ENCODE measurements at regions of chr3 and their contacts with region 1.

Region 1: DNA sequence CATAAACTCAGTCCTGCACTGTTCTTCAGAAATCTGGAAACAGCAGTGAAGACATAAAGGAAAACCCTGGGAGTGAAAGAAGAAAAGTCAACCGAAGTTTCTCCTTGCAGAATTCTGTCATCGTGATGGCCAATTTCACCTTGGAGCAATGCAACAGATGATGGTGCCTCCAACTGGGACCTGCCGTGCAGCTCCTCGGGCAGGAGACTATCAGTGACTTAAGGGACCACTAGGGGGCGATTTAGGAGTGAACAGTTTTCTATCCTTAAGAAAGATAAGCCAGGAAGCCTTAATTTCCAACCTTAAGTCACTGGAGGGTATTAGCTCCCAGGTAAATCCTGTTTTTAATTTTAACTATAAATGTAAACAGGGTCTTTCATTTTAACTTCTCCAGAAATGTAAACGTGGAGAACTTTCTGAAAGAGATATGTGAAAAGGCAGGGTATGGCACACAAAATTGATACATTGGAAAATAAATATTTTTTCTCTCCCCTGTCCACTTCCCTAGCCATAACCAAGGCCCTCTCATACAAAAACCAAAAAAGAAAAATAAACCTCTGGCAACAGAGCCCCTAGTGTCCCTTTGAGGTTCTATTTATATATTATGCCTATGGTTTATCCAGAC is 116.3 kb downstream of the PDZRN3 start:
- DNase-seq: peak; percentile 72
- H3K4me3 Mint-ChIP-seq: no peak overlapping the region
- H3K27ac Mint-ChIP-seq: no peak overlapping the region
- H3K4me1 Mint-ChIP-seq: no peaks in the 10 kb centered on the region
- H3K27me3 Mint-ChIP-seq: no peaks in the 10 kb centered on the region
- CTCF ChIP-seq: peak; percentile 71

Region 2: DNA sequence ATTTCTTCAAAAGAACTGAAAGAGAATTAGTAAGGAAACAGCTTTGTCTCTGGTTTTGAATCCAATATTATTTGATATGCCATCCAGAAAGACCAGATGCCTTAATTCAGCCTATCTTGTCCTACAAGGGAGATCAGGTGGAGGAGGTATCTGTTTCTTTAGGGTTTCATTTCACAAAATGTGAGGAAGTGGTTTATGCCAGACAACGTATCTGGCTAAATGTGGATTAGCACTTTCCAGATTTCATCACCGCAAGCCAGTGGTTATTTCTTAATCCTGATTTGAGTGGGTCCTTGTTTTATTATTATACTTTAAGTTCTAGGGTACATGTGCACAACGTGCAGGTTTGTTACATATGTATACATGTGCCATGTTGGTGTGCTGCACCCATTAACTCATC is 175.9 kb before region 1 on chr3:
- CTCF ChIA-PET with region 1: no interaction called
- POLR2A ChIA-PET with region 1: no interaction called
- intact Hi-C with region 1: no loop called
- DNase-seq: no peak
- H3K4me3 Mint-ChIP-seq: no peak overlapping the region
- H3K27ac Mint-ChIP-seq: no peak overlapping the region
- H3K4me1 Mint-ChIP-seq: no peaks in the 10 kb centered on the region
- H3K27me3 Mint-ChIP-seq: peaks cover 10% of the 10 kb centered on the region
- CTCF ChIP-seq: no peak

Region 3: DNA sequence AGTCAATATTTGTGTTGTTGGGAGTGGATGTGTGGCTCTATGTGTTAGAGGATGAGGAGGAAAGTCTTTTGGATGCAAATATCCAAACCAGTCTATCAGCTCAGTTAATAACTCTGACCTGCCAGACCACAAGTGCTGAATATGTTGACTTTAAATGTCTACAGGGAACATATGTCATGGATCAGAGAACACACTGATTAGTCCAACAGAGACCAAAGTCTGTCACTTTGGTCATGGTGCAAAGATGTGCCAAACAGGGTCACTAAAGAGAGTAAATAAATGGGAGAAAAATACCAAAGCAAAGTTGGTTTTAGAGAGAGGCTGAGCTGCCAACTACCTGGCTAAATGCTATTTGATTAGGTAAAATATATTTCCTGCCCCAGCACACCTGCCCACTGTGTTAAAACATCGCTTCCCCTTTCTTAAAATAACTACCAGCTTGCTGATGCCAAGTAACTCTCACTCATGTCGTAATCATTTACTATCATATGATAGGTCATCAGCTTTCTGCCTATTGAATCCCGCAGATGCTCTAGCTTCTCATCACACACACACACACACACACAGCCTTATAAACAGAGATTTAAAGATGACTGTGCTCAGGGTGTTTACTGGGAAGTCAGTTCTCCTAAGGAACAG is 57.0 kb before region 1 on chr3:
- CTCF ChIA-PET with region 1: interaction called, 30 read pairs
- POLR2A ChIA-PET with region 1: interaction called, 3 read pairs
- intact Hi-C with region 1: no loop called
- DNase-seq: no peak
- H3K4me3 Mint-ChIP-seq: no peak overlapping the region
- H3K27ac Mint-ChIP-seq: no peak overlapping the region
- H3K4me1 Mint-ChIP-seq: no peaks in the 10 kb centered on the region
- H3K27me3 Mint-ChIP-seq: no peaks in the 10 kb centered on the region
- CTCF ChIP-seq: no peak

Region 4: DNA sequence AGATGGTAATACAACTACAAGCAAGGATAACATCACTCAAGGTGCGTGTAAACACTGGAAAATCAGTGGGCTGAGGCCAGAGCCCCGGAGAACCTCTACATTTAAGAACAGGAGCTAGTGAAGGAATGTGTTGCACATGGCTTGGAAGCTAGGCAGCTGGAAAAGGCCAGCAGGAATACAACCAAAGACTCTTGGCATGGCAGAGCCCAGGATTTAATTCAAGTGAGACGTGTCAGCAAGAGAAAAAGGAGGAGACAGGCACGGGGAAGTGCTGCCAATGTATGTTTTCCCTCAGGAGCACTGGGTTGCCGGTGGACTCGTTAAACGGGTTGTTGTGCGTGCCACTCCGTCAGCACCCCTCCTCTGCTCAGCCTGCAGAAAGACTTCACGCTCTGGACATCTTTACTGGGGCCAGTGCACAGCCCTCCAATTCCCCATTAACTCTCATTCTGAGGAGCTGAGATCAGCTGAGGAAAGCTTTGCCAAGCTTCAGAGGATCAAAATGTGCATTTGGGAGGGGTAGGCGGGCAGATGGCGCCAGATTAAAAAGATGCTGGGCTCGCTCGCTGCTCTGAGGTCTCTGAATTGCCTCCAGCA is 12.5 kb after region 1 on chr3:
- CTCF ChIA-PET with region 1: interaction called, 16 read pairs
- POLR2A ChIA-PET with region 1: no interaction called
- intact Hi-C with region 1: no loop called
- DNase-seq: no peak
- H3K4me3 Mint-ChIP-seq: no peak overlapping the region
- H3K27ac Mint-ChIP-seq: no peak overlapping the region
- H3K4me1 Mint-ChIP-seq: peaks cover 6% of the 10 kb centered on the region
- H3K27me3 Mint-ChIP-seq: peaks cover 9% of the 10 kb centered on the region
- CTCF ChIP-seq: no peak

Region 5: DNA sequence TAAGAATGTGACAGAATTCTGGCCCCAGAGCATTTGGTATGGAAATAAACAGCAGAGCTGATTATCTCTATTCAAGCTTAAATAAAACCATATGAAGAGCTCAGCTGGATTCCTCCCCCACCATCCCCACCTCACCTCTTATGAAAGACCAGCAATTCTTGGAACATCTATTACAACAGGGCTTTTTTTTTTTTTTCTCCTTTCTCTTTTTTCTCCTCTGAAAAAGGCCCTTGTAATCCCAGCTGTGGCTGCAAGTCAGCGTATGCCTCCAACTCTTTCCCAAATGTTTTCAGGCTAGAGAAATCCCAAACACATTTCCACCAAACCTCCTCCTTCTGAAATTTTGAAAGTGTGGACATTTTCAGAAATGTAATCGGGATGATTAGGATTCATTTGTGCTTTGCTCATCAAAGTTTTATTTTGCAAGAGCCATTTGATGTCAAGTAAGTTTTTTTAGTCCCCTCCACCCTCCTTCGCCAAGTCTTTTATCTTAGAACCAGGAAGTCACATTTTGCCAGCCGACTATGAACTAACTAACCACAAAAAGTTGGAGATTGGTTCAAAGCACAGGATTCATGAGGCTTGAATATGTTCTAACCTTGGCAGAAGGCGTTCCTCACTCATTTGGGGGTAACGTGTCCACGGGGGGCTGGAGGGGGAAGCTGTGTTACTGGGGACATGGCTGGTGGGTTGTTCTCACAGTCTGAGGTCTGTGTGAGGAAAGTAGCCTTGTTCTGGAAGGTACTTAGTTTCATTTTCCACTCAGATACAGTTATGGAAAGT is 258.3 kb after region 1 on chr3:
- CTCF ChIA-PET with region 1: interaction called, 26 read pairs
- POLR2A ChIA-PET with region 1: no interaction called
- intact Hi-C with region 1: no loop called
- DNase-seq: peak; percentile 11
- H3K4me3 Mint-ChIP-seq: no peak overlapping the region
- H3K27ac Mint-ChIP-seq: no peak overlapping the region
- H3K4me1 Mint-ChIP-seq: peaks cover 5% of the 10 kb centered on the region
- H3K27me3 Mint-ChIP-seq: no peaks in the 10 kb centered on the region
- CTCF ChIP-seq: no peak

Region 6: GRCh38 chr3:73848173-73848906 is 339.9 kb after region 1 on chr3:
- CTCF ChIA-PET with region 1: interaction called, 200 read pairs
- POLR2A ChIA-PET with region 1: interaction called, 10 read pairs
- intact Hi-C with region 1: loop called (anchors 1 kb)
- DNase-seq: peak; percentile 22
- H3K4me3 Mint-ChIP-seq: no peak overlapping the region
- H3K27ac Mint-ChIP-seq: no peak overlapping the region
- H3K4me1 Mint-ChIP-seq: no peaks in the 10 kb centered on the region
- H3K27me3 Mint-ChIP-seq: peaks cover 25% of the 10 kb centered on the region
- CTCF ChIP-seq: peak; percentile 57

Measured in MCF 10A (cell line).